Endothelial cell of umbilical vein (primary cell): ENCODE measurements at regions of chr7 and their contacts with region 1.

Region 1: DNA sequence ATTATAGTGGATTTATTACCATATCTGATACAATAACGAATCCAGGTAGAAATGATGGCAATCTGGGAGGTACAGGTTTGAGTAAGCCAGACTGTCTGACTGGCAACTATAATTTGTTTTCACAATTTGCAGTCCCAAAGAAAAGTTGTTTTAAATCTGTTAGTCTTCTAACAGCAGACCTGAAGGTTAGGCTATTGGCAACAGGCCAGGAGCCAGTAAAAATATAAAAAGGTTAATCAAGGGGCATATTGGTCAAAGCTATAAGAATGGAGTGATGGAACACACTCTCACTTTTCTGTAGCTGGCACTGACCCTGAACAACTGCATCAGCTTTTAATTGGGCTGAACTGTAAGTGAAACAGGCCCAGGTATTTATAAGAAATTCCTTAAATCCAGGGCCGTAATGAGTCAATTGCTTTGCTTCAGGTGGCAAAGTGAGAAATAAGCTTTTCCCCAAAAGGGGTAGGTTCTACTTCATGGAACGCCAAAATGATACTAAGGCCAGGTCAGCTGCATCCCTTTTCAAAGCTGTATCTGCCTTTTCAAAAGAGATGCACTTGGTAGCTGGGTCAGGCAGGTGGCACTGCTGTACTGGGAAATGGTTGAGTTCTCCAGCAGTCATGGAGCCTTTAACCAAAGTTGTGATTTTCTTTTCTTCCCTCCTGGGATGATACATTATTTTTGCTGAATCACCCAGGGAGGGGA is 7.0 kb upstream of the GPR22 start:
- DNase-seq: peak; percentile 67
- H3K4me3 ChIP-seq: no peak overlapping the region
- H3K27ac ChIP-seq: no peak overlapping the region
- H3K4me1 ChIP-seq: no peaks in the 10 kb centered on the region
- H3K27me3 ChIP-seq: no peaks in the 10 kb centered on the region
- CTCF ChIP-seq: peak; percentile 65 to 71
- POLR2A ChIP-seq: no peak

Region 2: GRCh38 chr7:107242267-107242666 is 220.6 kb before region 1 on chr7:
- CTCF ChIA-PET with region 1: no interaction called
- POLR2A ChIA-PET with region 1: no interaction called
- dilution Hi-C with region 1: no loop called
- intact Hi-C with region 1: no loop called
- DNase-seq: no peak
- H3K4me3 ChIP-seq: no peak overlapping the region
- H3K27ac ChIP-seq: no peak overlapping the region
- H3K4me1 ChIP-seq: no peaks in the 10 kb centered on the region
- H3K27me3 ChIP-seq: no peaks in the 10 kb centered on the region
- CTCF ChIP-seq: no peak
- POLR2A ChIP-seq: no peak

Region 3: DNA sequence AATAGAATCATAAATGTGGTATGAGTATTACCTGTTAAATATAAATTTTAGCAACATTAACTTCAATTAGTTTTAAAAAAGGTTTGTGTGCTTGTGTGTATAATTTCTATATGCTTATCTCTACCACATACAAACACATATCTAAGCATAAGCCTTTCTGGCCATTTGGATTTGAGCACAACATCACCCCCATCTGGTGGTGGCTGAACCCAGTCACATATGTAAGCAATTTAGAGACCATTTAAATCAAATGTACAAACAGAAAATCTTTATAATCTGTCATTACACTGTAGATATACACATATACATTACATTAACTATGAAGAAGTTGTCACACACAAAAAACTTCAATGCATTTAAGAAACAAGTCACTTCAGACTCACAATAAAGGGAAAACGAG is 38.7 kb after region 1 on chr7:
- CTCF ChIA-PET with region 1: interaction called, 36 read pairs
- POLR2A ChIA-PET with region 1: no interaction called
- dilution Hi-C with region 1: no loop called
- intact Hi-C with region 1: no loop called
- DNase-seq: peak; percentile 64
- H3K4me3 ChIP-seq: no peak overlapping the region
- H3K27ac ChIP-seq: no peak overlapping the region
- H3K4me1 ChIP-seq: peaks cover 2% of the 10 kb centered on the region
- H3K27me3 ChIP-seq: no peaks in the 10 kb centered on the region
- CTCF ChIP-seq: peak; percentile 36
- POLR2A ChIP-seq: no peak

Region 4: DNA sequence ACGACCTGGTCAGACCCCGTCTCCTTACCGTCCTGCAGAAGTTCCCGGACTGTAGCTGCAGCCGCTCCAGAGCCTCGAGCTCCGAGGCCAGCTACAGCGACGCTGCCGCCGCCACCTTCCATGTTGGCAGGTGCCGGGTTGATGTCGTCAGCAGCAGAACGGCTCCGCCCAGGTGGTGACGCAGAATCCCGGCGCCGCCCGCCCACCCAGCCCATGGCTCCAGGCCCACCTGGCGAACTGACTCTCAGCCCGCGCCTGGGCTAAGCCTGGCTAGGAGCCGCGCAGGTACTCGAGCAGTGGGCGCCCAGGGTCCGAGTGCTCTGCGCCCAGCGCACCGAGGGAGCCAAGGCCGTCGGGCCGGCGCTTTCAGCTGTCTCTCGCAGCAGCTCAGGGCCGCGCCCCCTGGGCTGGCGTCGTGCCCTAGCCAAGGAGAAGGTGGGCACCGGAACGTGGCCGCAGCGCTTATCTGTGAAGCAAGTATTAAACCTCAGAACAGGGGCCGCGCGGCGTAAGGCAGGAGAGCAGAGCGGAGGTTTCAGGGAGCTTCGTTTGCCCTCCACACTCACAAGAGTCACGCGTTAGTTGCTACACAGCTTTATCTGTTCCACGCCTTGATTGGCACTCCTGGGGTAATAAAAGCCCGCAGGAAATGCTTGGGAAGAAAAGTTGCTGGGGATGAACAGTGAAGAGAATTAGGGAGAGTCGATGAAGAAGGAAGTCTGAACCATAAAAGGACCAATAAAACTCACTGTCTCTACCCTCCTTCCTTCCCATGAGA is 101.1 kb after region 1 on chr7 and contains the starts of genes COG5 and DUS4L:
- CTCF ChIA-PET with region 1: interaction called, 3 read pairs
- POLR2A ChIA-PET with region 1: no interaction called
- dilution Hi-C with region 1: no loop called
- intact Hi-C with region 1: loop called (anchors 5 kb)
- DNase-seq: peak; percentile 89
- H3K4me3 ChIP-seq: peak within 1 kb of the TSS; percentile 87 to 99 (median 95)
- H3K27ac ChIP-seq: peak within 1 kb of the TSS; percentile 91
- H3K4me1 ChIP-seq: peaks cover 33% of the 10 kb centered on the region
- H3K27me3 ChIP-seq: no peaks in the 10 kb centered on the region
- CTCF ChIP-seq: no peak
- POLR2A ChIP-seq: peak; percentile 88
- total RNA-seq, gene COG5: 42.4 and 45.3 TPM in 2 replicates
- total RNA-seq, gene DUS4L: 9.6 and 9.8 TPM in 2 replicates

Region 5: GRCh38 chr7:107594961-107595737 is 132.3 kb after region 1 on chr7:
- CTCF ChIA-PET with region 1: interaction called, 6 read pairs
- POLR2A ChIA-PET with region 1: no interaction called
- dilution Hi-C with region 1: no loop called
- intact Hi-C with region 1: loop called (anchors 10 kb)
- DNase-seq: peak; percentile 98
- H3K4me3 ChIP-seq: peak overlapping the region in 1 of 3 experiments; percentile 7
- H3K27ac ChIP-seq: peak overlapping the region; percentile 97
- H3K4me1 ChIP-seq: peaks cover 57% of the 10 kb centered on the region
- H3K27me3 ChIP-seq: no peaks in the 10 kb centered on the region
- CTCF ChIP-seq: no peak
- POLR2A ChIP-seq: no peak

Region 6: GRCh38 chr7:107614425-107614824 is 151.5 kb after region 1 on chr7:
- CTCF ChIA-PET with region 1: no interaction called
- POLR2A ChIA-PET with region 1: no interaction called
- dilution Hi-C with region 1: no loop called
- intact Hi-C with region 1: no loop called
- DNase-seq: no peak
- H3K4me3 ChIP-seq: no peak overlapping the region
- H3K27ac ChIP-seq: no peak overlapping the region
- H3K4me1 ChIP-seq: peaks cover 4% of the 10 kb centered on the region
- H3K27me3 ChIP-seq: no peaks in the 10 kb centered on the region
- CTCF ChIP-seq: no peak
- POLR2A ChIP-seq: no peak

Region 7: DNA sequence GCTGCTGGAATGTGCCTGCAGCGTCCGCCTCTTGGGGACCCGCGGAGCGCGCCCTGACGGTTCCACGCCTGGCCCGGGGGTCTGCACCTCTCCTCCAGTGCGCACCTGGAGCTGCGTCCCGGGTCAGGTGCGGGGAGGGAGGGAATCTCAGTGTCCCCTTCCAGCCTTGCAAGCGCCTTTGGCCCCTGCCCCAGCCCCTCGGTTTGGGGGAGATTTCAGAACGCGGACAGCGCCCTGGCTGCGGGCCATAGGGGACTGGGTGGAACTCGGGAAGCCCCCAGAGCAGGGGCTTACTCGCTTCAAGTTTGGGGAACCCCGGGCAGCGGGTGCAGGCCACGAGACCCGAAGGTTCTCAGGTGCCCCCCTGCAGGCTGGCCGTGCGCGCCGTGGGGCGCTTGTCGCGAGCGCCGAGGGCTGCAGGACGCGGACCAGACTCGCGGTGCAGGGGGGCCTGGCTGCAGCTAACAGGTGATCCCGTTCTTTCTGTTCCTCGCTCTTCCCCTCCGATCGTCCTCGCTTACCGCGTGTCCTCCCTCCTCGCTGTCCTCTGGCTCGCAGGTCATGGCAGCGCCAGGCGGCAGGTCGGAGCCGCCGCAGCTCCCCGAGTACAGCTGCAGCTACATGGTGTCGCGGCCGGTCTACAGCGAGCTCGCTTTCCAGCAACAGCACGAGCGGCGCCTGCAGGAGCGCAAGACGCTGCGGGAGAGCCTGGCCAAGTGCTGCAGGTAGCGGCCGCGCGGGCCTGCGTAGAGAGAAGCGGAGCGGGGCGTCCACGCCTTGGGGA is 198.4 kb after region 1 on chr7:
- CTCF ChIA-PET with region 1: interaction called, 12 read pairs
- POLR2A ChIA-PET with region 1: no interaction called
- dilution Hi-C with region 1: no loop called
- intact Hi-C with region 1: no loop called
- DNase-seq: peak; percentile 67
- H3K4me3 ChIP-seq: peak overlapping the region; percentile 44 to 56 (median 50)
- H3K27ac ChIP-seq: no peak overlapping the region
- H3K4me1 ChIP-seq: peaks cover 18% of the 10 kb centered on the region
- H3K27me3 ChIP-seq: peaks cover 6 to 27% of the 10 kb centered on the region in 2 experiments
- CTCF ChIP-seq: peak in 1 of 2 donors; percentile 32
- POLR2A ChIP-seq: no peak

Region 8: DNA sequence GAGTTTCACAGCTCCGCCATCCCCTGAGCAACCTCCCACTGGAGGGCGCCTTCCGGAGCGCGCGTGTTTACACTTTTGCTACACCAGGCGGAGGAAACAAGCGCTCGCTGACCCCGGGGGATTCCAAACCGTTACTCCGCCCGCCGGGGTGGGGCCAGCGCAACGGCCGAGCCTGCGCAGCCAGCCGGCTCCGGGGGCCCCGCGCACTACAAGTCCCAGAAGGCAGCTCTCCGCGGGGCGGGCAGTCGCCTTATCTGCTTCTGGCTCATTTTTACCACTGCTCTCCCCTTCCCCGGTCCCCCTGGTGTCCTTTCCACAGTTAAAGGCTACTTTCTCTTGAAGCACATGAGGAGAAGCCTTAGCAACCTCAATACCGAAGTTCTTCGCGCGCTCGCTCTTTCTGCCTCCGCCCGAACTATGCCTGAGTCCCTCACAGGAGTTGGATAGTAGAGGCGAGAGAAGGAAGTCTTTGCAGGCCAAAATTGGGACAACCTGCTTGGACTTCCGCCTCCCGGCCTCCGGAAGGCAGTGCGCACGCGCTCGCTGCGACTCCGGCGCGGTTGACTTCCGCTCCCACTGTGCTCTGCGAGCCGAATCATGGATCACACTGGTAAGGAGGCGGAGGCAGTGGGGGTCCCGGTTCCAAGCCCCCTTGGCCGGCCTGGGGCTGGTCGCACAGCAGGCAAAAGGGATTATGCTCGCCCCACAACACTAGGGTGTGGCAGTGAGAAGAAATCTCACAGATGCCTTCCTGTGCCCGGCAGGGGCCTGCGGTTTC is 280.9 kb after region 1 on chr7 and contains the start of gene CBLL1:
- CTCF ChIA-PET with region 1: interaction called, 14 read pairs
- POLR2A ChIA-PET with region 1: no interaction called
- dilution Hi-C with region 1: no loop called
- intact Hi-C with region 1: loop called (anchors 1 kb)
- DNase-seq: peak; percentile 98
- H3K4me3 ChIP-seq: peak within 1 kb of the TSS; percentile 45 to 94 (median 79)
- H3K27ac ChIP-seq: peak within 1 kb of the TSS; percentile 96
- H3K4me1 ChIP-seq: peaks cover 38% of the 10 kb centered on the region
- H3K27me3 ChIP-seq: no peaks in the 10 kb centered on the region
- CTCF ChIP-seq: peak; percentile 65 to 76
- POLR2A ChIP-seq: peak; percentile 2
- total RNA-seq, gene CBLL1: 30.6 and 31.1 TPM in 2 replicates